Mammary epithelial cell (primary cell): ENCODE measurements at regions of chr14 and their contacts with region 1.

Region 1: GRCh38 chr14:90842726-90843125 is 26.5 kb upstream of the TTC7B start:
- DNase-seq: no peak
- H3K4me3 ChIP-seq: no peak overlapping the region
- H3K27ac ChIP-seq: no peak overlapping the region
- H3K4me1 ChIP-seq: peaks cover 14% of the 10 kb centered on the region
- H3K27me3 ChIP-seq: no peaks in the 10 kb centered on the region
- CTCF ChIP-seq: no peak

Region 2: DNA sequence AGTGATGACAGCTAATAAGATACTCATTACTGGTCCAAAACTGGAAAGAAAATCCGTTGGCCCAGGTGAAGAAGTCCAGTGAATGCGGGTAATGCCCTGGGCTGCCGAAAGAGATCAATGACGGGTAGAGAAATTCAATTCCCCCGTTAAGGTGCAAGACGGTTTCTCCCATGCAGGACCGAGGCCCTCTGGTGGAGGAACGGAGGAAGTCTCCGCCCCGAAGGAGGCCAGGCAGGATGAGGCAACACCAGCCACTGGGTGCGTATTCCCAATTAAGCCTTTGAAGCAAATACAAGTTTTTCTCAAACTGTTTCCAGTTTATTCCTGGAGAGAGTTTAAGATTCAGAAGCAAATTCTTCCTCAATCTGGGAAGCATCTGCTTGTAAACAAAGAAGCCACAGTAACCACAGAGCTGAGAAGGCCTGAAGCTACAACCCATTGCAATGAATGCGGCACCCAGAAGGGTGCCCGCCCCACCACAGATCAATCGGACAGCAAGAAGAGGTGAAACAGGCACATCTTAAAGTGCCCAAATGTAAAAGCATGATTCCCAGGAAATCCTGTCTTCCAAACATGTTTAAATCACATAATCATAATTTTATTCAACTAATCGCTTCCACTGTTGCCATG is 145.0 kb before region 1 on chr14:
- CTCF ChIA-PET with region 1: no interaction called
- dilution Hi-C with region 1: no loop called
- in situ Hi-C with region 1: no loop called
- intact Hi-C with region 1: no loop called
- DNase-seq: peak; percentile 62
- H3K4me3 ChIP-seq: no peak overlapping the region
- H3K27ac ChIP-seq: no peak overlapping the region
- H3K4me1 ChIP-seq: no peaks in the 10 kb centered on the region
- H3K27me3 ChIP-seq: no peaks in the 10 kb centered on the region
- CTCF ChIP-seq: peak; percentile 94 to 95

Region 3: DNA sequence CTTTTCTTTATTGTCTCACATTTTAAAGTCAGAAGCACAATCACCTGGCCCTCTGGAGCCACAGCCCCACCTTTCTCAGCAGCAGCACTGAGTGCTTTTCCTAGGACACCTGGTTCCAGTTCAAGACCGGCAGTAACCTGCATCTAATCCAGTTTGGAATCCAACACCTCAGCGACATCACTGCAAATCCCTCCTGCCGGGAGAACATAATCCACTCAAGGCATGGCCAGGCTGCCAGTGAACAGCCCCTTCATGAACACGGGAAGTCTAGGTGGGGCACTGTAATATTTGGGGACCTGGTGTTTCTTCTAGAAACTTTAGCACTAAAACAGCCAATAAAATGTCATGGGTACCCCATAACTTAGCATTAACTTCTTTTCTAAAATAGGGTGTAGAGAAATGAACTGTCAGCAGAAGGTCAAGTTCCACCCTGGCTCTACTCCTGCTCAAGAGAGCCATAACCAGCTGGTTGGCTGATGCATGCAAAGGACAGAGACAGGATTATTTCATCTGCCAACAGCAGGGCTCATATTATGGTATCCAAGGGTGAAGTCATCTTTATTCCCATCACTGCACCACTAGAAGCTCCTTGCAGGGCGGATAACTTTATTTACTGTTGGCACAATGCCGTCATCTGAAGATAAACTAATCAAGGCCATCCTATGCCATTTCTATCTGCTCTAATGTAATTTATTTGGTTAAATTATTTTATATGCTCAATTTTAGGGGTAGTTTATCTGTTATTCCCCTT is 103.2 kb before region 1 on chr14:
- CTCF ChIA-PET with region 1: no interaction called
- dilution Hi-C with region 1: loop called (anchors 5 kb)
- in situ Hi-C with region 1: no loop called
- intact Hi-C with region 1: no loop called
- DNase-seq: no peak
- H3K4me3 ChIP-seq: no peak overlapping the region
- H3K27ac ChIP-seq: no peak overlapping the region
- H3K4me1 ChIP-seq: no peaks in the 10 kb centered on the region
- H3K27me3 ChIP-seq: no peaks in the 10 kb centered on the region
- CTCF ChIP-seq: no peak

Region 4: GRCh38 chr14:90795746-90796145 is 47.0 kb before region 1 on chr14:
- CTCF ChIA-PET with region 1: no interaction called
- dilution Hi-C with region 1: loop called (anchors 5 kb)
- in situ Hi-C with region 1: no loop called
- intact Hi-C with region 1: no loop called
- DNase-seq: peak; percentile 85
- H3K4me3 ChIP-seq: no peak overlapping the region
- H3K27ac ChIP-seq: peak overlapping the region; percentile 15
- H3K4me1 ChIP-seq: peaks cover 18% of the 10 kb centered on the region
- H3K27me3 ChIP-seq: no peaks in the 10 kb centered on the region
- CTCF ChIP-seq: peak in 1 of 2 donors; percentile 5

Region 5: GRCh38 chr14:91021991-91022621 is 179.4 kb after region 1 on chr14:
- CTCF ChIA-PET with region 1: no interaction called
- dilution Hi-C with region 1: loop called (anchors 10 kb)
- in situ Hi-C with region 1: no loop called
- intact Hi-C with region 1: no loop called
- DNase-seq: no peak
- H3K4me3 ChIP-seq: no peak overlapping the region
- H3K27ac ChIP-seq: no peak overlapping the region
- H3K4me1 ChIP-seq: no peaks in the 10 kb centered on the region
- H3K27me3 ChIP-seq: no peaks in the 10 kb centered on the region
- CTCF ChIP-seq: no peak